CD4-positive, alpha-beta memory T cell (primary cell): ENCODE measurements at regions of chr12 and their contacts with region 1.

Region 1: DNA sequence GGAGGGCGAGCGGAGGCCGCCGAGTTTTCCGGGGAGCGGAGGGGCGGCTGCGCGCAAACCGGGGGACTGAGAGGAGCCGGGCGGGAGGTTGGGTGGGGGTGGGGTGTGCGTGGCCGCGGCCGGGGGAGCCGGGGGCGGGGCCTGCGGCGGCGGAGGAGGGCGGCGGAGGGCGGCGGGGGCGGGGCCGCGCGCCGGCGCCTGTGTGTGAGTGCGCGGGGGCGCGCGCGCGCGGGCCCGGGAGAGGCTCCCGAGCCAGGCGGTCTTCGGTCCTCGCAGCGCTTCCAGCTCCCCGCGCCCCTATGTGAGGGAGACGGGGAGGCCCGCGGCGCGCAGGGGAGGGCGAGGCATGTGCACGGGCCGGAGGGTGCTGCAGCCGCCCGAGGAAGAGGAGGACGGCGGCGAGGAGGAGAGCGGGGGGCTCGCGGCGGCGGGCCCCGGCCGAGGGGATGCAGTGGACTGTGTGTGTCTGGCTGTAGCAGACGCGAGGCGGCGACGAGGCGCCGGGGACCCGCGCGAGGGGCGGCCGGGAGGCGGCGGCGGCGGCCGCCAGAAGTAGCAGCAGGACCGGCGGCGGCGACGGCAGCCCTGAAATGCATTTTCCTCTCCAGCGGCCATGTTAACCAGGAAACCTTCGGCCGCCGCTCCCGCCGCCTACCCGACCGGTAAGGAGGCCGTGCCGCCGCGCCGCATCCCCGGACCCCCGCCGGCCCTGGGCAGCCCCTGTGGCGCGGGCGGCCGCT is at the start of gene DYRK2:
- DNase-seq: peak; percentile 75 to 79 (median 77)
- H3K4me3 ChIP-seq: peak within 1 kb of the TSS; percentile 42 to 84
- H3K4me3 Mint-ChIP-seq: peak within 1 kb of the TSS; percentile 84 to 100 (median 98)
- H3K27ac ChIP-seq: peak within 1 kb of the TSS; percentile 69
- H3K27ac Mint-ChIP-seq: peak within 1 kb of the TSS; percentile 89 to 98 (median 94)
- H3K4me1 ChIP-seq: peaks cover 34% of the 10 kb centered on the region
- H3K4me1 Mint-ChIP-seq: peaks cover 28 to 46% (median 32%) of the 10 kb centered on the region in 4 donors
- H3K27me3 ChIP-seq: no peaks in the 10 kb centered on the region
- H3K27me3 Mint-ChIP-seq: no peaks in the 10 kb centered on the region
- total RNA-seq, gene DYRK2: 167 to 170 TPM

Region 2: GRCh38 chr12:67268896-67269631 is 379.6 kb before region 1 on chr12 and contains the start of gene CAND1:
- CTCF ChIA-PET with region 1: no interaction called
- POLR2A ChIA-PET with region 1: interaction called, 5 read pairs
- intact Hi-C with region 1: loop called (anchors 1 kb)
- DNase-seq: peak; percentile 98 to 99 (median 99)
- H3K4me3 ChIP-seq: peak within 1 kb of the TSS; percentile 81 to 84
- H3K4me3 Mint-ChIP-seq: peak within 1 kb of the TSS; percentile 92 to 99 (median 98)
- H3K27ac ChIP-seq: peak within 1 kb of the TSS; percentile 97
- H3K27ac Mint-ChIP-seq: peak within 1 kb of the TSS; percentile 95 to 100 (median 99)
- H3K4me1 ChIP-seq: peaks cover 45% of the 10 kb centered on the region
- H3K4me1 Mint-ChIP-seq: peaks cover 28 to 52% (median 39%) of the 10 kb centered on the region in 4 donors
- H3K27me3 ChIP-seq: no peaks in the 10 kb centered on the region
- H3K27me3 Mint-ChIP-seq: no peaks in the 10 kb centered on the region
- total RNA-seq, gene CAND1: 124 TPM

Region 3: DNA sequence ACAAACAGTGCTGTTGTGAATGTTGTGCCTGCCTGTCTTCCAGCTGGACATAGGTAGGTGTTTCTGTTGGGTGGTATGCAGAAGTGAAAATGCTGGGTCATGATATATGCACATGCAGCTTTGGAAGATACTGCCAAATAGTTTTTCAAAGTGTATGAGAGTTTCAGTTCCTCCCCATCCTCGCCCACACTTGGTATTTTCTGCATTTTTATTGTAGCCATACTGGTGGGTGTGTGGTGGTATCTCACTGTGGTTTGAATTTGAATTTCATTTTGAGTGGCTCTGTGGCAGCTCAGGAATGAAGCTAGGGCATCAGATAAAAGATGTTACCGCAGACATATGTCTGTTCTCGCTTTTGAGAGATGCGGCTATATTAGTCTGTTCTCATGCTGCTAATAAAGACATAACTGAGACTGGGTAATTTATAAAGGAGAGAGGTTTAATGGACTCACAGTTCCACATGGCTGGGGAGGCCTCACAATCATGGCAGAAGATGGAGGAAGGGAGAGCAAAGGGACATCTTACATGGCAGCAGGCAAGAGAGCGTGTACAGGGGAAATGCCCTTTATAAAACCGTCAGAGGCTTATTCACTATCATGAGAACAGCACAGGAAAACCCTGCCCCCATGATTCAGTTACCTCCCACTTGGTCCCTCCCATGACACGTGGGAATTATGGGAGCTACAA is 196.4 kb before region 1 on chr12:
- CTCF ChIA-PET with region 1: no interaction called
- POLR2A ChIA-PET with region 1: interaction called, 40 read pairs
- intact Hi-C with region 1: loop called (anchors 2 kb)
- DNase-seq: no peak
- H3K4me3 ChIP-seq: no peak overlapping the region
- H3K4me3 Mint-ChIP-seq: peak overlapping the region in 4 of 8 donors; percentile 21 to 69 (median 66)
- H3K27ac ChIP-seq: no peak overlapping the region
- H3K27ac Mint-ChIP-seq: peak overlapping the region in 5 of 7 donors; percentile 3 to 69 (median 25)
- H3K4me1 ChIP-seq: peaks cover 40% of the 10 kb centered on the region
- H3K4me1 Mint-ChIP-seq: peaks cover 45 to 53% (median 48%) of the 10 kb centered on the region in 4 donors
- H3K27me3 ChIP-seq: no peaks in the 10 kb centered on the region
- H3K27me3 Mint-ChIP-seq: peaks cover 0 to 1% of the 10 kb centered on the region in 2 donors

Region 4: GRCh38 chr12:67498991-67499390 is 149.7 kb before region 1 on chr12:
- CTCF ChIA-PET with region 1: no interaction called
- POLR2A ChIA-PET with region 1: no interaction called
- intact Hi-C with region 1: no loop called
- DNase-seq: no peak
- H3K4me3 ChIP-seq: no peak overlapping the region
- H3K4me3 Mint-ChIP-seq: no peak overlapping the region
- H3K27ac ChIP-seq: no peak overlapping the region
- H3K27ac Mint-ChIP-seq: no peak overlapping the region
- H3K4me1 ChIP-seq: peaks cover 8% of the 10 kb centered on the region
- H3K4me1 Mint-ChIP-seq: peaks cover 16 to 25% (median 23%) of the 10 kb centered on the region in 4 donors
- H3K27me3 ChIP-seq: no peaks in the 10 kb centered on the region
- H3K27me3 Mint-ChIP-seq: no peaks in the 10 kb centered on the region

Region 5: DNA sequence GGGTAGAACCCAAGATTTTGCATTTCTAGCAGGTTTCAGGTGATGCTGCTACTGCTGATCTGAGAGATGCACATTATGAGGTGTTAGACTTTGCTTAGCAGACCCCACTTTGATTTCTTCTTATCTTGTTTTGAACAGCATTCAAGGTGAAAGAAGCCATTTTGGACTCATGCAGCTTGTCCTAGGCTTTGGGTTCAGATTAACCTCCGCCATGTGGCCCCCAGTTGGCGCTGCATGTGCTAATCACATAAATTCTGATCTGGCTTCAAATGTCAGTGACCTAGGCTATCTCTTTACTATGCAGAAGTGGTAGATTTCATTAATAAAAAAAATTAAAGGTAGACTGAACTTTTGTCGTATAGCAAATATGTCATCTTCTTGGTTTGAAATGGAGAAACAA is 89.9 kb before region 1 on chr12:
- CTCF ChIA-PET with region 1: interaction called, 8 read pairs
- POLR2A ChIA-PET with region 1: interaction called, 26 read pairs
- intact Hi-C with region 1: loop called (anchors 5 kb)
- DNase-seq: no peak
- H3K4me3 ChIP-seq: no peak overlapping the region
- H3K4me3 Mint-ChIP-seq: no peak overlapping the region
- H3K27ac ChIP-seq: no peak overlapping the region
- H3K27ac Mint-ChIP-seq: no peak overlapping the region
- H3K4me1 ChIP-seq: peaks cover 22% of the 10 kb centered on the region
- H3K4me1 Mint-ChIP-seq: peaks cover 0 to 18% (median 10%) of the 10 kb centered on the region in 4 donors
- H3K27me3 ChIP-seq: no peaks in the 10 kb centered on the region
- H3K27me3 Mint-ChIP-seq: no peaks in the 10 kb centered on the region

Region 6: DNA sequence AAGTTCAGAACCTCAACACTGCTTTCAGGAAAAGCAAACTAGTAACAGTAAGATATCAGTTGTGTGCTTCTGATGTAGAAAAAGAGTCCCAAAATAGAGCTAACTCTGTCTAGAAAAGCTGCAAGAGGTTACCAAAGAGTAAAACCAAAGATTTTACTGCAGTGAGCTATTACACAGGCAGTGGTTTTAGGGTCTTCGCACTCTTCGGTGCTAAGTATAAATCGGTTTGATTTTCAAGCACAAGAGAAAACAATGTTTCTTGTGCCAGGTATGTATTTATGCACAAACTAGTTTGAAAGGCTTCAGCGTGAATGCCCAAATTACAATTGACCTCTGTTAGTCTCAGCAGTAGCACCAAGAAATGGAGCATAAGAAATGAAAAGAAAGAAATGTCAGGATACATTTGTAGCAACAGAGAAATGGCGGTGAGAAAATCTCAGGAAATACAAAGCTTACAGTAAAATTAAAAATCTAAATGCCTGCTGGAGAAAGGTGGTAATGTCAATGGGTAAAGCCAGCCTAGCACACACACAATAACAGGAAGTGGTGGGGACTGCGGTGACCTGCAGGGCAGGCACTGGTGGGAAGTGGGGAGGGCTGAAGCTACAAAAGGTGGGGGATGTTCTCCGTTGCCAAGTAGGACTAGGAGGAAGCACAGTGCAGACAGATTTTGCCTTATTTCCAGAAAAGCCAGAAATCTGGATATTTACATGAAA is 18.2 kb before region 1 on chr12:
- CTCF ChIA-PET with region 1: interaction called, 15 read pairs
- POLR2A ChIA-PET with region 1: interaction called, 338 read pairs
- intact Hi-C with region 1: loop called (anchors 1 kb)
- DNase-seq: peak; percentile 91 to 96 (median 92)
- H3K4me3 ChIP-seq: no peak overlapping the region
- H3K4me3 Mint-ChIP-seq: peak overlapping the region; percentile 61 to 88 (median 74)
- H3K27ac ChIP-seq: peak overlapping the region; percentile 43
- H3K27ac Mint-ChIP-seq: peak overlapping the region; percentile 87 to 96 (median 91)
- H3K4me1 ChIP-seq: peaks cover 84% of the 10 kb centered on the region
- H3K4me1 Mint-ChIP-seq: peaks cover 67 to 91% (median 82%) of the 10 kb centered on the region in 4 donors
- H3K27me3 ChIP-seq: no peaks in the 10 kb centered on the region
- H3K27me3 Mint-ChIP-seq: no peaks in the 10 kb centered on the region

Region 7: DNA sequence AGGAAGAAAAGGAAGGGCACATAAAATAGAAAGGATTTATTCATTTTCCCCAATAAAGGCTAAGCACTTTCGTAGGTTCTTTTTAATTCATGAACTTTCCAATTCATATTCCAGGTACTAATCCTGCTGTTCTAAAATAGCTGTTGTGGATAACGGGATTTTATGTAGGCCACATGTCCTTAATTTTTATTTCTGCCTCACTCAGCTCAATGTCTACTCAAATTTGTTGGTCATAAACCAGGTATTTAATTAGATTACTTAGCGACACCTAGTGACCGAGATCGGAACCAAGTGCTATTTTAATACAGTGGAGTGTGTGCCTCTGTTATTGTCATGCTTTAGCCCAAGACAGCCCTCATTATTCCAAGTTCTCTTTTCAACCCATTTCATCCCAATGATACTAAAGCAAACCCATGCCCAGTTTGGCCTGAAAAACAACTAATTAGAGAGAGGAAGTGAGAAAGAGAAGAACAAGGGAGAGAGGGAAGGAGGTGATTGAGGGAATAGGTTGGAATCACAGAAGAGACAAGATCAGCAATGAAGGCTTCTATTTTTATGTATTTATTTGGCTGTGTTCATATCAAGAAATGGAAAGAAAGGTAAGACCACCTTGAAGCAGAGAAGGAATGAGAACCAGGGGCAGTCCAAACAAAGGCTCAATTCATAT is 294.7 kb after region 1 on chr12:
- CTCF ChIA-PET with region 1: interaction called, 55 read pairs
- POLR2A ChIA-PET with region 1: interaction called, 8 read pairs
- intact Hi-C with region 1: loop called (anchors 1 kb)
- DNase-seq: peak; percentile 62 to 71 (median 65)
- H3K4me3 ChIP-seq: no peak overlapping the region
- H3K4me3 Mint-ChIP-seq: no peak overlapping the region
- H3K27ac ChIP-seq: no peak overlapping the region
- H3K27ac Mint-ChIP-seq: peak overlapping the region in 1 of 7 donors; percentile 37
- H3K4me1 ChIP-seq: no peaks in the 10 kb centered on the region
- H3K4me1 Mint-ChIP-seq: peaks cover 3 to 5% (median 4%) of the 10 kb centered on the region in 4 donors
- H3K27me3 ChIP-seq: no peaks in the 10 kb centered on the region
- H3K27me3 Mint-ChIP-seq: peaks cover 1 to 2% of the 10 kb centered on the region in 2 donors